Transverse colon (tissue), 4 donors: ENCODE measurements at regions of chr1 and their contacts with region 1.

Region 1: GRCh38 chr1:154558575-154559465 is at the start of gene UBE2Q1:
- DNase-seq: peak; percentile 99
- H3K4me3 ChIP-seq: peak within 1 kb of the TSS; percentile 87 to 97 (median 92)
- H3K27ac ChIP-seq: peak within 1 kb of the TSS; percentile 88 to 89 (median 89)
- H3K4me1 ChIP-seq: peaks cover 7 to 29% (median 26%) of the 10 kb centered on the region in 4 donors
- H3K27me3 ChIP-seq: no peaks in the 10 kb centered on the region
- CTCF ChIP-seq: no peak
- EP300 ChIP-seq: peak; percentile 25
- POLR2A ChIP-seq: peak; percentile 51
- total RNA-seq, gene UBE2Q1: 10.1 to 33.9 (median 26.6) TPM

Region 2: GRCh38 chr1:154760469-154760933 is 201.7 kb after region 1 on chr1:
- in situ Hi-C with region 1: loop called in 1 of 4 experiments (anchors 10 kb)
- intact Hi-C with region 1: loop called (anchors 10 kb)
- DNase-seq: peak; percentile 79
- H3K4me3 ChIP-seq: peak overlapping the region in 3 of 4 donors; percentile 17 to 52 (median 31)
- H3K27ac ChIP-seq: no peak overlapping the region
- H3K4me1 ChIP-seq: peaks cover 0 to 14% (median 9%) of the 10 kb centered on the region in 4 donors
- H3K27me3 ChIP-seq: peaks cover 64% of the 10 kb centered on the region
- CTCF ChIP-seq: peak; percentile 61 to 84 (median 78)
- EP300 ChIP-seq: no peak
- POLR2A ChIP-seq: no peak

Region 3: DNA sequence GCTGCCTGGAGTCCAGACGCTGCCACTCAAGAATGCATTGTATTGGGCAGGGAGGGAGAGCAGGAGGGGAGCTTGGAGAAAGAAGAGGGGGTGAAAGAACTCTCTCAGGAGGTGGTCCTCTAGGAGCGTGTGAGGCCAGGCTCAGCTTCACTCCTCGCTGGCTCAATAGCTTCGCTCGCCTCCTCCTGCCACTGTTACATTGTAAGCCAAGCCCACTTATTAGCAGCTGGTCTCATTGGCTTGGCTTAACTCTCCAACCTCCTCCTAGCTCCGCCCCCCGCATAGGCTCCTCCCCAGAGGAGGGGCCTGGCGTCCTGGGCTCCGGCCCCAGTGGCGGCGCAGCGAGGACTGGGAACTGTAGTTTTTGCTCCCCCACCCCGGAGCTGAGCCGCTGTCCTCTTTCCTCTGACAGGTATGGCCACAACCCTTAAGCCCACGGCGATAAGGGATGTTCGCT is 311.3 kb after region 1 on chr1 and contains the start of gene KCNN3:
- in situ Hi-C with region 1: loop called in 1 of 4 experiments (anchors 25 kb)
- intact Hi-C with region 1: loop called (anchors 10 kb)
- DNase-seq: peak; percentile 92
- H3K4me3 ChIP-seq: peak within 1 kb of the TSS; percentile 11 to 26 (median 18)
- H3K27ac ChIP-seq: peak within 1 kb of the TSS in 3 of 4 donors; percentile 18 to 61 (median 29)
- H3K4me1 ChIP-seq: peaks cover 0 to 20% (median 14%) of the 10 kb centered on the region in 4 donors
- H3K27me3 ChIP-seq: peaks cover 32% of the 10 kb centered on the region
- CTCF ChIP-seq: no peak
- EP300 ChIP-seq: no peak
- POLR2A ChIP-seq: no peak
- total RNA-seq, gene KCNN3: 2.3 to 5.0 (median 3.5) TPM

Region 4: DNA sequence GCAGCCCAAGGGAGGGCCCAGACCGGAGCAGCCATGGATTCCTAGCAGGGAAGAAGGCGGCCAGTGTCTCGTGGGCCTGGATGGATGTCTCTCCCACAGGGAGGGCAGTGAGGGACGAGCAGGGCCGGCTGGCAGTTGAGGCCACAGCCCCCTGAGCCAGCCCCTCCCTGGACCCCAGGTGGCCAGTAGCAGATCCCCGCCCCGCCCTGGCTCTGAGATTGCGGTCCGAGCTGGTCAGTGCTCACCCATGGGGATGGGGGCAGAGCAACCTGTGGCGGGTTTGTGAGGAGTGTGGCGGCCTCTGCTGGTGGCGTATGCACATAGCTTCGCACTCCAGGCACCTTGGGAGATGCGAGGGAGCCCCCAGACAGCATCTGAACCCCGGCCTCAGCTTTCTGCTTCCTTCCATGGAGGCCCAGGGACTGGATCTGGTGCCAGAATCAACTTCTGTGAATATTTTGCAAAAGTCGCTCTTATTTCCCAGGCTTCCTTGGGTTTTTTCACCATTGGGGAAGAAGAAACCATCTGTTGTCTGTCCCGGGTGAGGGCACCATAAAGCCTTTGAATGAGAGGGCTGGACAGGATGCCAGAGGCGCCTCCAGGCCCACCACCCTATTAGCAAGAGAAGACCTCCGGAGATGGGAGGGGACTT is 319.7 kb after region 1 on chr1:
- in situ Hi-C with region 1: loop called in 1 of 4 experiments (anchors 25 kb)
- intact Hi-C with region 1: loop called (anchors 10 kb)
- DNase-seq: peak; percentile 80
- H3K4me3 ChIP-seq: no peak overlapping the region
- H3K27ac ChIP-seq: no peak overlapping the region
- H3K4me1 ChIP-seq: peaks cover 0 to 8% (median 3%) of the 10 kb centered on the region in 4 donors
- H3K27me3 ChIP-seq: no peaks in the 10 kb centered on the region
- CTCF ChIP-seq: peak; percentile 81 to 87 (median 85)
- EP300 ChIP-seq: no peak
- POLR2A ChIP-seq: no peak

Region 5: GRCh38 chr1:155063550-155064110 is 504.8 kb after region 1 on chr1 and contains the start of gene EFNA4:
- in situ Hi-C with region 1: no loop called
- intact Hi-C with region 1: loop called (anchors 10 kb)
- DNase-seq: peak; percentile 93
- H3K4me3 ChIP-seq: peak within 1 kb of the TSS; percentile 79 to 85 (median 83)
- H3K27ac ChIP-seq: peak within 1 kb of the TSS; percentile 89 to 93 (median 92)
- H3K4me1 ChIP-seq: peaks cover 20 to 38% (median 34%) of the 10 kb centered on the region in 4 donors
- H3K27me3 ChIP-seq: no peaks in the 10 kb centered on the region
- CTCF ChIP-seq: no peak
- EP300 ChIP-seq: no peak
- POLR2A ChIP-seq: peak; percentile 90
- total RNA-seq, gene EFNA4: 18.3 to 57.2 (median 37.2) TPM

Region 6: DNA sequence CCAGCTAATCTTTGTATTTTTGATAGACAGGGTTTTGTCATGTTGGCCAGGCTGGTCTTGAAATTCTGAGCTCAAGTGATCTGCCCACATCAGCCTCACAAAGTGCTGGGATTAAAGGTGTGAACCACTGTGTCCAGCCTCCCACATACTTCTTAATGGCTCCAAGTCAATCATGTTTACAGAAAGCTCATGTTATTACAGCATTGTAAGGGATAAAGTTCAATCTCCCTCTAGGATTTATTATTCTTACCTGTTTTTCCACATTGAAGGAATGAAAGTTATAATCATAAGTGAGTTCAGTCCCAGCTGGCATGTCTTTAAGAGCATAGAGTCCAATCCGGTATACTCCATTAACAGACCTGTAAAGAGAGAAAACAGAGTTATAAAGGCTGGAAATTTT is 801.2 kb after region 1 on chr1:
- in situ Hi-C with region 1: no loop called
- intact Hi-C with region 1: no loop called
- DNase-seq: no peak
- H3K4me3 ChIP-seq: no peak overlapping the region
- H3K27ac ChIP-seq: peak overlapping the region in 3 of 4 donors; percentile 35 to 57 (median 37)
- H3K4me1 ChIP-seq: peaks cover 0 to 10% (median 5%) of the 10 kb centered on the region in 4 donors
- H3K27me3 ChIP-seq: no peaks in the 10 kb centered on the region
- CTCF ChIP-seq: no peak
- EP300 ChIP-seq: no peak
- POLR2A ChIP-seq: no peak